Activated CD4-positive, alpha-beta memory T cell treated with anti-CD3 and anti-CD28 coated beads for 36 hours (primary cell): ENCODE measurements at regions of chr6 and their contacts with region 1.

Region 1: DNA sequence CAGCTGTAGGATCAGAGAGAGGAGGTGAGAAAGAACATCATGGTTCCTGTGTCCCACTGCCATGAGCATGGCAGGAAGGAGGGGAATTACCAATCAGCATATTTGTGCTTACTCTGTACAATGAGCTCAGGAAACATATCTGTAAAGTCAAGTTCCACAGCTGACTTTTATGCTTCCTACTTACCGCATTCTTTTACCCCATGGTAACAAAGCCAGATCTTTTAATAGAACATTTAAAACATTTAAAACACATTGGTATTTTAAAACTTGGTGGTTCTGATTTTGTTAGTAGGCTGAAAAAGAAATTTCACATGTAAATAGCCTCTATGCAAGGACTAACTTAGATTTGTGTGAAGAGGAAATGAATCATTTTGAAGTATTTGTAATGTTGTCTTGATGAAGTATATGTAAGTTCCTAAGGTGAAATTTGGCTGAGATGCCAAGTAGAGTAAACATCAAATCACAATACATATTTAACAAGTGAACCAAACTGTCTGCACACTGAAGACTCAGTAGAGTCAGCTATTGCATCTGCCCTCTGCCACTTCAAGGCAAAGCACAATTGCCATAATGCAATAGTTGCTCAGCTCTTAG is 114.7 kb downstream of the GJA10 start:
- DNase-seq: peak; percentile 54
- H3K4me3 Mint-ChIP-seq: peak overlapping the region; percentile 12
- H3K27ac Mint-ChIP-seq: peak overlapping the region; percentile 94
- H3K4me1 Mint-ChIP-seq: peaks cover 48% of the 10 kb centered on the region
- H3K27me3 Mint-ChIP-seq: no peaks in the 10 kb centered on the region

Region 2: GRCh38 chr6:89978749-89979145 is 30.3 kb before region 1 on chr6:
- CTCF ChIA-PET with region 1: no interaction called
- POLR2A ChIA-PET with region 1: no interaction called
- intact Hi-C with region 1: loop called (anchors 1 kb)
- DNase-seq: no peak
- H3K4me3 Mint-ChIP-seq: no peak overlapping the region
- H3K27ac Mint-ChIP-seq: no peak overlapping the region
- H3K4me1 Mint-ChIP-seq: peaks cover 16% of the 10 kb centered on the region
- H3K27me3 Mint-ChIP-seq: no peaks in the 10 kb centered on the region

Region 3: DNA sequence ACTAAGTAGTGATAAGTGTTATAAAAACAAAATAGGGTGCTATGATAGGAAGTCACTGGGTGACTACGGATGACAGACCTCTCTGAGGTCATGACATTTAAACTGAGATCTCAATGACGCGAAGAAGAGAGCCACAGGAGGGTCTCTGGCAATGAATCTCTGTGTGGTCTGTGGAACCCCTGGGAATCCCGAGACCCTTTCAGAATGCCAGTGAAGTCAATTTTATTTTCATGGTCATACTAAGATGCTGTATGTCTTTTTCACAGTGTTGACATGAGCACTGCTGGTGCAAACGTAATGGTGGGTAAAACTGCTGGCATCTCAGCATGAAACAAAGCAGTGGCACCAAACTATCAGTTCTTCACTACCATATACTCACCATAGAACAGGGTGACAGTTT is 40.3 kb after region 1 on chr6:
- CTCF ChIA-PET with region 1: no interaction called
- POLR2A ChIA-PET with region 1: interaction called, 9 read pairs
- intact Hi-C with region 1: loop called (anchors 1 kb)
- DNase-seq: peak; percentile 44
- H3K4me3 Mint-ChIP-seq: peak overlapping the region; percentile 18
- H3K27ac Mint-ChIP-seq: peak overlapping the region; percentile 89
- H3K4me1 Mint-ChIP-seq: peaks cover 51% of the 10 kb centered on the region
- H3K27me3 Mint-ChIP-seq: no peaks in the 10 kb centered on the region

Region 4: GRCh38 chr6:90144396-90144795 is 135.4 kb after region 1 on chr6:
- CTCF ChIA-PET with region 1: interaction called, 3 read pairs
- POLR2A ChIA-PET with region 1: no interaction called
- intact Hi-C with region 1: loop called (anchors 1 kb)
- DNase-seq: peak; percentile 74
- H3K4me3 Mint-ChIP-seq: no peak overlapping the region
- H3K27ac Mint-ChIP-seq: peak overlapping the region; percentile 57
- H3K4me1 Mint-ChIP-seq: peaks cover 54% of the 10 kb centered on the region
- H3K27me3 Mint-ChIP-seq: no peaks in the 10 kb centered on the region

Region 5: DNA sequence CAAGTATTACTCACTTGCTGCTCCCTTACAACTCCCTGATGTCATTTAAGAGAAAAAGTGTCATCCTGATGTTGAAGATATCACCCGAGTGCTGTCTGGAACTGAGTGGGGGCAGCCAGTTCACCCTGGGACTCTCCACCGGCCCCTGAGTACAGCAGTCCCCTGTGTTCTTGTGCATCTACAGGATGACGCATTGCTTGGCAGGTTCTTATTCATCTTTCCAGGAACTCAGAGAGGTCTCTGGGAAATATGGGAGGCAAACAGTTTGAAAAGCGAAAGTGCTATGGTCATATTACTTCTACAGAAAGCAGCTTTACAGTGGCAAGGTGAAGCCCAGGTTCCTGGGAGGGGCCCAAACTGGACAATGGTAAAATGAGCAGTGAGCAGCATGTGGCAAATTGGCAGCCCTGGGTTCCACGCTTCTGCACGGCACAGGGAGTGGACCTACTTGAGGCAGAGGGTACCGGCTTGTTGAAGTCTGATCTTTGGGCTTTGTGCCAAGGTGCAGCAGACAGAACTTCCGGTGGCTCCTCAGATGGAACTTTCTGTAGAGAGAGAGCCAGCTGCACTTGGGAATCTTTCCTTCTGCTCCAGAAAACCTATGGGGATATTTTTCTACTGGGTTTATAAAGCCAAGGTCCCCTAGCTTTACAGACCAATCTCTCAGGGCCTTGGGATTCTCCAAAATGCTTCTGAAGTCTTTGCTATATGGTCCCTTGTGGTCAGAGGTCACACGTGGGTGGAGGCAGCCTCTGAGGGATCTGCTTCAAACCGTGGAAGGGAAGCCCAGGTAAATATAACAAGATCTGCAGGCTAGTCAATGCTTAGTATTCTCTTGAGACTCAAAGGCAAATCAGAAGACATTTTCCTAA is 449.6 kb after region 1 on chr6:
- CTCF ChIA-PET with region 1: no interaction called
- POLR2A ChIA-PET with region 1: no interaction called
- intact Hi-C with region 1: loop called (anchors 5 kb)
- DNase-seq: peak; percentile 94
- H3K4me3 Mint-ChIP-seq: peak overlapping the region; percentile 40
- H3K27ac Mint-ChIP-seq: peak overlapping the region; percentile 95
- H3K4me1 Mint-ChIP-seq: peaks cover 87% of the 10 kb centered on the region
- H3K27me3 Mint-ChIP-seq: no peaks in the 10 kb centered on the region